RWPE1 (cell line): ENCODE measurements at regions of chr1 and their contacts with region 1.

Region 1: GRCh38 chr1:40699787-40700186 is 8.3 kb downstream of the NFYC start:
- DNase-seq: no peak
- H3K27ac ChIP-seq: no peak overlapping the region
- CTCF ChIP-seq: no peak

Region 2: GRCh38 chr1:40495315-40495903 is 204.4 kb before region 1 on chr1:
- CTCF ChIA-PET with region 1: interaction called, 10 read pairs
- POLR2A ChIA-PET with region 1: no interaction called
- DNase-seq: no peak
- H3K27ac ChIP-seq: no peak overlapping the region
- CTCF ChIP-seq: no peak

Region 3: GRCh38 chr1:40711465-40712404 is 11.9 kb after region 1 on chr1:
- CTCF ChIA-PET with region 1: no interaction called
- POLR2A ChIA-PET with region 1: no interaction called
- DNase-seq: peak; percentile 84
- H3K27ac ChIP-seq: no peak overlapping the region
- CTCF ChIP-seq: no peak